AG04449 (cell line): ENCODE measurements at regions of chr16 and their contacts with region 1.

Region 1: GRCh38 chr16:50065624-50066481 is at the start of gene HEATR3:
- DNase-seq: peak; percentile 53
- H3K4me3 ChIP-seq: peak within 1 kb of the TSS; percentile 100
- CTCF ChIP-seq: no peak

Region 2: DNA sequence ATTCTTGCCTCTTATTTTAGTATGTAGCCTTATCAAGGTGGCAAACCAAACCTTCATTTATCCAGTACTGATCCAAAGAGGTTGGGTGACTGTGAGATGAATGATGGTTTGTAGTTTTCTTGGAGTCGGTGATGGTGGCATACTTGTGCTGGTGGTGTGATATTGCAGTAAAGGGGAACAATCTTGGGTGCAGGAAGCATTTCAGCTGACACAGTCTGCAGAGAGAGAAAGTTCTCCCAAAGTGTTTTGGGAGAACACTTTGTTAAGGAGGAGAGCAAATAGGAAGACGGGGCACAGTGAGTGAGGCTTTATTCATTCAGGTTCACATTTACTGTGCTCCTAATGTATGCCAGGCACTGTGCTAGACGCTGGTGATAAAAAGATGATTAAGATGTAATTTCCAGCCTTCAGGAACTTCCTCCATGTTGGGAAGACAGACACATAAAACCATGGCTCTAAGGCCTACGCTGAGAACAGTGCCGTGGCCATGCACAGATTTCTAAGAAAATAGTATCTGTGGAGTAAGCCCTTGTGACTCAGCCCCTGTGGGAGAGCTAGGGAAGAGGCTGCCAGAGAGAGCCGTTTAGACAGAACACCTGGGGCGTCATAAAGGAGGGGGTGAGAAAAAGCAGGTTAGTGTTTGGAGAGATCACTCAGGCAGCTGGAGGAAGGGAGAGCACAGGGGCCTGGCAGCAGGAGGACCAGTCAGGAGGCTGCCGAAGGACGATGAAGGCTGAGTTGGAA is 13.7 kb after region 1 on chr16:
- CTCF ChIA-PET with region 1: interaction called, 36 read pairs
- POLR2A ChIA-PET with region 1: interaction called, 3 read pairs
- DNase-seq: no peak
- H3K4me3 ChIP-seq: no peak overlapping the region
- CTCF ChIP-seq: no peak

Region 3: DNA sequence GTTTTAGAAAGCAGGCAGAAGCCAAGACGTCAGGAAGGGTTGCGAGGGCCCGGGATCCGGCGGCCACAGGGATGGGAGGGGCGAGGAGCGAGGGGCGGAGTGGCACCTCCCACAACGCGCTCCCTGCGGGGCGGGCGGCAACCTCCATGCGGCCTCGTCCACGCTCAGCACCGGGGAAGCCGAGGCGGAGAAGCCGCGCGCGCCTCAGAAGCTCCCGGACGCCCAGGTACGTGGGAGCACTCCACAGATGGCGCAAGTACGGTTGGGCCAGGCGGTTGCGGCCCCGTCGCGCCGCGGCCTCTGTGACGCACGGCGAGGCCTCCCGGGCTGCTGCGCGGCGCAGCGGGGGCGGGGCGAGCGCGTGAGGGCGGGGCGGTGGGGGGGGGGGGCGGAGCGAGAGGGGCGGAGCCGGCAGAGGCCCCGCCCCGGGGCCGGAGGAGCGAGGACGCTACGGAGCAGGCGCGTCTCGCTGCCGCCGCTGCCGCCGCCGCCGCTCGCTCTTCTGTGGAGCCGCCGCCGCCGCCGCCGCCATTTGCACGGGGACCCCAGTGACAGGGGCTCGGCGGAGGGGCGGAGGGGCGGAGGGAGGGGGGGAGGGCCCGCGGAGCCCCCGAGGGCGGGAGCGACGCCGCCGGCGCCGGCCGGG is 87.1 kb after region 1 on chr16 and contains the start of gene TENT4B:
- CTCF ChIA-PET with region 1: interaction called, 14 read pairs
- POLR2A ChIA-PET with region 1: no interaction called
- DNase-seq: no peak
- H3K4me3 ChIP-seq: peak within 1 kb of the TSS; percentile 83
- CTCF ChIP-seq: no peak

Region 4: GRCh38 chr16:50202926-50203624 is 137.2 kb after region 1 on chr16:
- CTCF ChIA-PET with region 1: interaction called, 180 read pairs
- POLR2A ChIA-PET with region 1: interaction called, 3 read pairs
- DNase-seq: peak; percentile 86
- H3K4me3 ChIP-seq: peak overlapping the region; percentile 9; the same call in 1 of the 2 replicates
- CTCF ChIP-seq: no peak